ENCODE measurements at regions of chr6 and their contacts with region 1.

Region 1: DNA sequence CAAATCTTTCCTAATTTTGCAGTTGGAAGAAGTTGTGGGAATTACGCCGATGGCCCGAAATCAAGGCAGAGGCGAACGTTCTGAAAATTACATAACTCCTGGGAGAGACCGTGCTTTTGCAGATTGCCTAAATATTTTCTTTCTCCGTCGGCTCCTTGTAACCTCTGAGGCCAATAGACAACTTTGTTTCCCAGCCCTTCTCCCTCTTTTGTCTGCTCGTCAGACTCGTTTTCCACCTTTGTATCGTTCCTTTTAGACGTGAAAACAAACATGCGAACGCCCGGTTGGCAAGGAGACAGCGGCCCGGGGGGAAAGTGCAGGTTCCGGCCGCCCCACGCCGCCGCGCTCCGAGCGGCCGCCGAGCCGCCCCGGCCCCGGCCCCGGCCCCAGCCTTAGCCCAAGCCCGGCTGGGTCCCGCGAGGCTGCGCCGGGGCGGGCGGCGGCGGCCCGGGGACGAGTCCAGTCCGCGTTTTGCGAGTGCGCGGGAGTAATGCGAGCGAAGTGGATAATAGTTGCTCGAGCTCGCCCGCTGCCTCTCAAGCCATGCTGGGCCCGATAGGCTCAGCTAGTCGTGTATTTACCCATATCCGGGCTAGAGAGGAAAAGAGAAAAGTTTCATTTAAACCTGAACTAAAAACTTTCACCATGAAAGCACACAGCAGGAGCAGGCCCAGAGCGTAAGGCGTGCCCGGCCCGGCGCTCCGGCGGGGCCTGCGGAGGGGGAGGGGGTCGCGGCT is at the start of gene ARID1B:
- DNase-seq: peak; percentile 84 to 87 (median 86)
- H3K4me3 ChIP-seq: peak within 1 kb of the TSS; percentile 54 to 72
- H3K4me3 Mint-ChIP-seq: peak within 1 kb of the TSS; percentile 92 to 99 (median 96)
- H3K27ac ChIP-seq: peak within 1 kb of the TSS; percentile 84
- H3K27ac Mint-ChIP-seq: peak within 1 kb of the TSS; percentile 97 to 99 (median 99)
- H3K4me1 ChIP-seq: peaks cover 21% of the 10 kb centered on the region
- H3K4me1 Mint-ChIP-seq: peaks cover 19 to 44% (median 30%) of the 10 kb centered on the region in 4 donors
- H3K27me3 ChIP-seq: no peaks in the 10 kb centered on the region
- H3K27me3 Mint-ChIP-seq: no peaks in the 10 kb centered on the region
- total RNA-seq, gene ARID1B: 118 to 131 TPM

Region 2: DNA sequence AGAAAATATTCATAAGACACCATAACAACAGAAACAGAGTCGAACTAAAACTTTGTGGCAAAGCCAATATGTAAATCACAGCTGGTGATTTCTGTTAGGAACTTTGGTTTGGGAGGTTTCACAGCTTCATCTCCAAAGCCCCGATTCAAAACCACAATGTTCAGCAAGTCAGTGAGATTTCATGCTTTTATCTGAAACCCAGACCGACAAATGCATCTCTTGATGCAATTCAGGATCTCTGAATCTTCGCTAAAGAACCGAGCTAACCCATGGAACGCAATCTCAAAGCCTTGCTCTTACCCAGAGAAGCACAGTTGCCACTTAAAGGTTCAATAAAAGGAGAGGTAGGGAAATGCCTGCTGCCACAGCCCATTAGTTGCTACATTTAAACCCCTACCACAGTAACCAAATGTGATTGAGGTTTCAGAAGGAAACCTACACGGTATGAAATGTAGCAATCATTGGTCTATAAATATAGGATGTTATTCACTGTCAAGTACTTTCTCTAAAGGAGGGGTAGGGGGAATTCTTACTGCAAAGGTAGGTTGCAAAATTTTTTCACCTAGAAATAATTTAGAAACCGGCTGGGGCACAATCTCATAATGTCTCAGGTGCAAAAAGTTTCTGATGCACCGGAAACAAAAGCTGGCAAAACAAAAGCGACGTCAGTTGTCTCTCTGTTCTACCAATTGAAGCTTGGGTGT is 380.8 kb before region 1 on chr6:
- CTCF ChIA-PET with region 1: no interaction called
- POLR2A ChIA-PET with region 1: interaction called, 12 read pairs
- intact Hi-C with region 1: loop called (anchors 2 kb)
- DNase-seq: peak; percentile 69 to 80 (median 73)
- H3K4me3 ChIP-seq: peak overlapping the region; percentile 9 to 53
- H3K4me3 Mint-ChIP-seq: peak overlapping the region; percentile 78 to 89 (median 86)
- H3K27ac ChIP-seq: peak overlapping the region; percentile 56
- H3K27ac Mint-ChIP-seq: peak overlapping the region; percentile 90 to 100 (median 98)
- H3K4me1 ChIP-seq: peaks cover 84% of the 10 kb centered on the region
- H3K4me1 Mint-ChIP-seq: peaks cover 51 to 89% (median 75%) of the 10 kb centered on the region in 4 donors
- H3K27me3 ChIP-seq: no peaks in the 10 kb centered on the region
- H3K27me3 Mint-ChIP-seq: no peaks in the 10 kb centered on the region

Region 3: DNA sequence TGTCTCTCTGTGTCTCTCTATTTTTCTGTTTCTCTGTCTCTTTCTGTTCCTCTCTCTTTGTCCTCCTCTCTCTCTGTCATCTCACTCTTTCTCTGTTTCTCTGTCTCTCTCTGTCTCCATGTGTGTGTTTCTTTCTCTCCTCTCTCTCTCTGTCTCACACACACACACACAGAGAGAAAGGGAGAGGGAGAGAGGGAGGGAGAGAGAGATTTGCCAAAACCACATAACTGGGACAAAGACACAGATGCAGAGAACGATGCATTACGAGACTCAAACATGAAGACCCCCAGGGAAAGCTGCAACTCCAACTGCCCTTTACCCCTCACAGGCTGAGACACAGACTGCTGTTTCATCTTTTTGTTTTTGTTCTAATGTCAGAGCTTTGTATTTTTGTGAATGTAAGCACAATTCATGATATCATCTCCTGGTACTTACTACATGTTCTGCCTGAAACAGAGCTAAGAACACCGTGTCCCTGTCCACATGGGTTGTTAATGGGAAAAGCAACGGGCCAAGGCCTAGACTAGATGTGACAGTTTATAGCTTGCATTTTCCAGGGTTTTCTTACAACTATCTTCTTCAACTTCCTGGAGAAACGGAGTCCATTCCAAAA is 176.9 kb before region 1 on chr6:
- CTCF ChIA-PET with region 1: no interaction called
- POLR2A ChIA-PET with region 1: no interaction called
- intact Hi-C with region 1: no loop called
- DNase-seq: no peak
- H3K4me3 ChIP-seq: no peak overlapping the region
- H3K4me3 Mint-ChIP-seq: no peak overlapping the region
- H3K27ac ChIP-seq: no peak overlapping the region
- H3K27ac Mint-ChIP-seq: no peak overlapping the region
- H3K4me1 ChIP-seq: no peaks in the 10 kb centered on the region
- H3K4me1 Mint-ChIP-seq: no peaks in the 10 kb centered on the region
- H3K27me3 ChIP-seq: no peaks in the 10 kb centered on the region
- H3K27me3 Mint-ChIP-seq: peaks cover 14 to 18% of the 10 kb centered on the region in 2 donors

Region 4: DNA sequence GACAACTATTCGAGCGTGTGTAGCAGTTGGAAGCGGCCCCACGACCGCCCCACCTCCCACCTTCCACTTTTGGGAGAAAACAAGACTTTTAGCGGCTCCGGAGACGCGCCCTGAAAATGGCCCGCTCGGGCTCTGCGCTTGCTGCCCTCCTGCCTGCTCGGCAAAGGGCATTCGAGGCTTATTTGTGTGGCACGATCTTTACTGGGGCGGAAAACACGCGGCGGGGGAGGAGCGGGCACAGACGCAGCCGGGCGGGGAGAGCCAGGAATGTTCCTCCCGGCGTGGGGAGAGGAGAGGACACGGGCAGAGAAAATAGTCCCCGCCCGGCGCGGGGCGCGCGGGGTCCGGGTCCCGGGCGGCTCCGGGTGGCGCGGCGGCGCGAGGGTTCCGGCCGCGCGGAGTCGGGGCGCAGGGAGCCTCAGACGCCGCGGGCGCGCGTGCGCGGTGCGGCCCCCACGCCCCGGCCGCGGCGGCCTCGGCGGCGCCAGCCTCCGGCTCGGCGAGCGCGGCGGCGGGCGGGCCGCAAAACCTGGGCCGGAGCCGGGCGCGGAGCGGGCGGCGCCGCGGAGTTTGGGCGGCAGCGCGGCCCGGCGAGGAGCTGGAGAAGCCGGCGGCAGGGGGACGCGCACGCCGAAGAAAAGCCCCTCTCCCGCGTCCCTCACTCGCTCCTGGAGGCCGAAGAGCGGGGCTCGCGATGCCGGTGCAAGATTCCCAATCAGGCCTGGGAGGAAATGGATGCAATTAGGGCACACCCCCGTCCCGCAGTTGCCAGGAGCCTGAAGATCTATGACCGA is 89.8 kb before region 1 on chr6:
- CTCF ChIA-PET with region 1: interaction called, 14 read pairs
- POLR2A ChIA-PET with region 1: interaction called, 93 read pairs
- intact Hi-C with region 1: loop called (anchors 1 kb)
- DNase-seq: peak; percentile 80 to 90 (median 85)
- H3K4me3 ChIP-seq: peak overlapping the region; percentile 68 to 92
- H3K4me3 Mint-ChIP-seq: peak overlapping the region; percentile 88 to 95 (median 92)
- H3K27ac ChIP-seq: peak overlapping the region; percentile 95
- H3K27ac Mint-ChIP-seq: peak overlapping the region; percentile 88 to 98 (median 97)
- H3K4me1 ChIP-seq: peaks cover 14% of the 10 kb centered on the region
- H3K4me1 Mint-ChIP-seq: peaks cover 10 to 24% (median 15%) of the 10 kb centered on the region in 4 donors
- H3K27me3 ChIP-seq: peaks cover 4% of the 10 kb centered on the region
- H3K27me3 Mint-ChIP-seq: no peaks in the 10 kb centered on the region

Region 5: DNA sequence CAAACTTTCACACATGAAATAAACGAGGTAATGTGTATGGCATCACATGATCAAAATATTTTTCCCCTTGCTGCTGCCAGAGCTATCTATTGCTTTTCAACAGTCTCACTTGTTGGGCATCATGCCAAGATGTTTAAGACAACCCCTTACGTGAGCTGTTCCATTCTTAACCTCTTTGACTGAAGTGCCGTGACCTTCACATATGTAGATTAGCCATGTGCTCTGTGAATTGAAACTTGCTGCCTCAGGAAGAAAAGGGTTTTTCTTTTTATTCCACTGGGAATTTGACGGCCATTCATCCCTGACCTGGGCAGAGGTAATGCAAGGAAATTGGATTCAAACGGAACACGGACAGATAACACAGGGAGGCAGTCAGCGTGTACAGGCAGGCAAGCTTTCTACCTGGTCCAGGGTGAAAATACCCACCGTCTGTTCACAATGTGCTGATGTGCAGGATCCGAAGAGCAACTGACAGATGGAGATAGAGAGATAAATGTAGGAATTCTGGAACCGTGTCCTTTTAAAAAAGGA is 14.4 kb after region 1 on chr6:
- CTCF ChIA-PET with region 1: interaction called, 7 read pairs
- POLR2A ChIA-PET with region 1: interaction called, 9 read pairs
- intact Hi-C with region 1: loop called (anchors 1 kb)
- DNase-seq: peak; percentile 29 to 74 (median 50)
- H3K4me3 ChIP-seq: no peak overlapping the region
- H3K4me3 Mint-ChIP-seq: peak overlapping the region in 7 of 8 donors; percentile 3 to 67 (median 55)
- H3K27ac ChIP-seq: no peak overlapping the region
- H3K27ac Mint-ChIP-seq: peak overlapping the region in 5 of 7 donors; percentile 2 to 58 (median 36)
- H3K4me1 ChIP-seq: peaks cover 99% of the 10 kb centered on the region
- H3K4me1 Mint-ChIP-seq: peaks cover 79 to 97% (median 88%) of the 10 kb centered on the region in 4 donors
- H3K27me3 ChIP-seq: no peaks in the 10 kb centered on the region
- H3K27me3 Mint-ChIP-seq: no peaks in the 10 kb centered on the region

Region 6: DNA sequence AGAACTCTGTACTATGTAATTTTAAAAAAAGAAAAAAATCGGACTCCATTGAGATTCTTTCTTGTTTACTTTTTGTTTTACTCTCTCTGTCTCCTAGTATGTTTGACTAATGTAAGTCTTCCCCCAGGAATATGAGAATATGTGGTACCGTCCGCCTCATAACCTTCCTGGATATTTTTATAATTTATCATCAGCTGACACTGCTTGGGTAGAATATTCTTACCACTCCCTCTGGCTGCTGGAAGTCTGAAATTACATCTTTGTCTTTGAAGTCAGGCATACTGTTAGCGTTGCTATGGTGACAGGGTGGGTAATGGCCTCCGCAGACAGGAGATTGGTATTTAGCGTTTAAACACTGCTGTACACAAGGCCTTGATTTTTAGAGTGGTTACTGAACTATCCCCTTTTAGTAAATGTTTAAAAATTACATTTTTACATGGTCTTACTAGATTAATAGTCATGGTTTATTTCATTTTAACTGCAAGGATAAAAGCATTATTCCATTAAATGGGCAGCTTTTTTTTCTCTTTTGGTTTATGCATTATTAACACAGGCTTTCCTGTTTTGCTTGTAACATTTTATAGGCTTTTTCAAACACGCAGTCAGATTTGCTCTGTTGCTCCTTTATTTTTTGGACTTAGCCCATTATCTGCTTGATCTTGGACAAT is 176.6 kb after region 1 on chr6:
- CTCF ChIA-PET with region 1: no interaction called
- POLR2A ChIA-PET with region 1: no interaction called
- intact Hi-C with region 1: loop called (anchors 10 kb)
- DNase-seq: peak; percentile 60 to 77 (median 74)
- H3K4me3 ChIP-seq: no peak overlapping the region
- H3K4me3 Mint-ChIP-seq: peak overlapping the region in 2 of 8 donors; percentile 7 to 34
- H3K27ac ChIP-seq: no peak overlapping the region
- H3K27ac Mint-ChIP-seq: peak overlapping the region; percentile 6 to 87 (median 77)
- H3K4me1 ChIP-seq: peaks cover 52% of the 10 kb centered on the region
- H3K4me1 Mint-ChIP-seq: peaks cover 55 to 83% (median 71%) of the 10 kb centered on the region in 4 donors
- H3K27me3 ChIP-seq: no peaks in the 10 kb centered on the region
- H3K27me3 Mint-ChIP-seq: no peaks in the 10 kb centered on the region

Region 7: GRCh38 chr6:157379656-157380454 is 602.8 kb after region 1 on chr6:
- CTCF ChIA-PET with region 1: no interaction called
- POLR2A ChIA-PET with region 1: interaction called, 3 read pairs
- intact Hi-C with region 1: loop called (anchors 10 kb)
- DNase-seq: peak; percentile 83 to 92 (median 85)
- H3K4me3 ChIP-seq: peak overlapping the region; percentile 76 to 83
- H3K4me3 Mint-ChIP-seq: peak overlapping the region; percentile 77 to 91 (median 86)
- H3K27ac ChIP-seq: peak overlapping the region; percentile 66
- H3K27ac Mint-ChIP-seq: peak overlapping the region; percentile 37 to 80 (median 66)
- H3K4me1 ChIP-seq: peaks cover 15% of the 10 kb centered on the region
- H3K4me1 Mint-ChIP-seq: peaks cover 11 to 17% (median 14%) of the 10 kb centered on the region in 4 donors
- H3K27me3 ChIP-seq: no peaks in the 10 kb centered on the region
- H3K27me3 Mint-ChIP-seq: peaks cover 0 to 3% of the 10 kb centered on the region in 2 donors